CD8-positive, alpha-beta memory T cell (primary cell): ENCODE measurements at regions of chr3 and their contacts with region 1.

Region 1: GRCh38 chr3:46105306-46105919 is 78.1 kb upstream of the XCR1 start:
- DNase-seq: no peak
- H3K4me3 ChIP-seq: no peak overlapping the region
- H3K4me3 Mint-ChIP-seq: peak overlapping the region in 5 of 7 donors; percentile 2 to 36 (median 24)
- H3K27ac ChIP-seq: no peak overlapping the region
- H3K27ac Mint-ChIP-seq: peak overlapping the region in 7 of 8 donors; percentile 5 to 98 (median 54)
- H3K4me1 ChIP-seq: peaks cover 59% of the 10 kb centered on the region
- H3K4me1 Mint-ChIP-seq: peaks cover 76 to 83% (median 81%) of the 10 kb centered on the region in 3 donors
- H3K27me3 ChIP-seq: no peaks in the 10 kb centered on the region
- H3K27me3 Mint-ChIP-seq: no peaks in the 10 kb centered on the region

Region 2: GRCh38 chr3:46208167-46208704 is 102.8 kb after region 1 on chr3 and contains the start of gene CCR1:
- CTCF ChIA-PET with region 1: interaction called, 10 read pairs
- POLR2A ChIA-PET with region 1: no interaction called
- DNase-seq: peak in 4 of 5 donors; percentile 6 to 61 (median 36)
- H3K4me3 ChIP-seq: no peak within 1 kb of the TSS
- H3K4me3 Mint-ChIP-seq: peak within 1 kb of the TSS; percentile 55 to 94 (median 88)
- H3K27ac ChIP-seq: no peak within 1 kb of the TSS
- H3K27ac Mint-ChIP-seq: peak within 1 kb of the TSS; percentile 75 to 97 (median 87)
- H3K4me1 ChIP-seq: peaks cover 30% of the 10 kb centered on the region
- H3K4me1 Mint-ChIP-seq: peaks cover 42 to 62% (median 54%) of the 10 kb centered on the region in 3 donors
- H3K27me3 ChIP-seq: no peaks in the 10 kb centered on the region
- H3K27me3 Mint-ChIP-seq: no peaks in the 10 kb centered on the region
- total RNA-seq, gene CCR1: 1.5 to 1.8 TPM